Activated CD8-positive, alpha-beta T cell treated with anti-CD3 and anti-CD28 coated beads for 36 hours (primary cell): ENCODE measurements at regions of chr2 and their contacts with region 1.

Region 1: DNA sequence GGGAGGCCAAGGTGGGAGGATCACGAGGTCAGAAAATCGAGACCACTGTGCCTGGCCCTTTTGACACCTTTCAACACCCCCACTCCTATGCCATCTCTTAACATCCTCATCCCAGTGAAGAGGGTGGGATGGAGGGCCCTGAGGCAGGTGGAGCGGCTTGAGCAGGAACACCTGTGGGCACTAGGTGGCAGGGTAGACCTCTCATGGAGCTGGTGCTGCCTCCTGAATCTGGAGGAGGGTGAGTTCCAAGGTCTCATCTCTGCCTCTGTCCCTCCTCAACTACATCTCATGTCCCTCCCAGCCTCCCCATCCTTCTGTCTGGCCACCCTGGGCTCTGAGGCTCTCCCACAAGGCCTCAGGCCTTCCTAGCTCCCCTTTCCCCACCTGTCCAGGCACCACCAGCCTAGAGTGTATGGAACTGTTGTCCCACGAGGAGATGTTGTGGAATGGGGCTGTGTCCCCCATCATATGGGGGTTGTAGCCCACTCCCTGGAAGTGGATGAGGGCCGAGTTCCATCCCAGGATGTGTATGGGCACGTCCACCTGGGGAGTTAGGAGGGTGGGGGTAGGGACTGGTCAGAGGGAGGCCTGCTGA is 17.0 kb upstream of the CRYBA2 start:
- DNase-seq: peak; percentile 58
- ATAC-seq: peak; percentile 80
- H3K4me3 Mint-ChIP-seq: no peak overlapping the region
- H3K27ac Mint-ChIP-seq: no peak overlapping the region
- H3K4me1 Mint-ChIP-seq: no peaks in the 10 kb centered on the region
- H3K27me3 Mint-ChIP-seq: peaks cover 18% of the 10 kb centered on the region
- CTCF ChIP-seq: peak; percentile 46

Region 2: GRCh38 chr2:218952160-218952559 is 58.1 kb before region 1 on chr2:
- CTCF ChIA-PET with region 1: no interaction called
- POLR2A ChIA-PET with region 1: no interaction called
- intact Hi-C with region 1: no loop called
- DNase-seq: no peak
- ATAC-seq: no peak
- H3K4me3 Mint-ChIP-seq: no peak overlapping the region
- H3K27ac Mint-ChIP-seq: no peak overlapping the region
- H3K4me1 Mint-ChIP-seq: no peaks in the 10 kb centered on the region
- H3K27me3 Mint-ChIP-seq: peaks cover 32% of the 10 kb centered on the region
- CTCF ChIP-seq: no peak

Region 3: GRCh38 chr2:218995972-218996711 is 14.1 kb before region 1 on chr2:
- CTCF ChIA-PET with region 1: interaction called, 23 read pairs
- POLR2A ChIA-PET with region 1: no interaction called
- intact Hi-C with region 1: no loop called
- DNase-seq: peak; percentile 90
- ATAC-seq: peak; percentile 91
- H3K4me3 Mint-ChIP-seq: no peak overlapping the region
- H3K27ac Mint-ChIP-seq: no peak overlapping the region
- H3K4me1 Mint-ChIP-seq: peaks cover 4% of the 10 kb centered on the region
- H3K27me3 Mint-ChIP-seq: peaks cover 75% of the 10 kb centered on the region
- CTCF ChIP-seq: peak; percentile 93

Region 4: DNA sequence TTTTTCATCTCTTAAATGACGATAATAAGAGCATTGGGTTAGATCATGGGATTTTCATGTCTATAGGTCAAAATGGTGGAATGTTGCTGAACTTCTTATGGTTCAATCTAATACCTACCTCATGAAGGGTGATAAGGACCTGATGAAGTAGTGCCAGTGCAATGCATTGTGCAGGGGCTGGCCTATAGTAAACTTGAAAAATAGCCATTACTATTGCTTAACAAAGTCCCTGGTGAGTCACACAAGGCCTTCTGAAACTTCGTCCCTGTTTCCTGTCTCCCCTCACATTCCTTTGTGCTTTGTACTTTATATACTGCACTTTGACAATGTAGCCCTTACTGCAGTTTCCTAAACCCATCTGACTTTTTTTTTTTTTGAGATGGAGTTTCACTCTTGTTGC is 1133.1 kb after region 1 on chr2:
- CTCF ChIA-PET with region 1: no interaction called
- POLR2A ChIA-PET with region 1: no interaction called
- intact Hi-C with region 1: no loop called
- DNase-seq: no peak
- ATAC-seq: no peak
- H3K4me3 Mint-ChIP-seq: no peak overlapping the region
- H3K27ac Mint-ChIP-seq: no peak overlapping the region
- H3K4me1 Mint-ChIP-seq: no peaks in the 10 kb centered on the region
- H3K27me3 Mint-ChIP-seq: no peaks in the 10 kb centered on the region
- CTCF ChIP-seq: no peak